ENCODE measurements at regions of chr6 and their contacts with region 1.

Region 1: GRCh38 chr6:31739639-31740396 is at the start of gene MSH5:
- DNase-seq: peak; percentile 99
- ATAC-seq: peak; percentile 83
- H3K4me3 Mint-ChIP-seq: peak within 1 kb of the TSS; percentile 92
- H3K27ac Mint-ChIP-seq: peak within 1 kb of the TSS; percentile 96
- H3K4me1 Mint-ChIP-seq: peaks cover 56% of the 10 kb centered on the region
- H3K27me3 Mint-ChIP-seq: no peaks in the 10 kb centered on the region
- total RNA-seq, gene MSH5: 64.8 to 73.6 TPM

Region 2: DNA sequence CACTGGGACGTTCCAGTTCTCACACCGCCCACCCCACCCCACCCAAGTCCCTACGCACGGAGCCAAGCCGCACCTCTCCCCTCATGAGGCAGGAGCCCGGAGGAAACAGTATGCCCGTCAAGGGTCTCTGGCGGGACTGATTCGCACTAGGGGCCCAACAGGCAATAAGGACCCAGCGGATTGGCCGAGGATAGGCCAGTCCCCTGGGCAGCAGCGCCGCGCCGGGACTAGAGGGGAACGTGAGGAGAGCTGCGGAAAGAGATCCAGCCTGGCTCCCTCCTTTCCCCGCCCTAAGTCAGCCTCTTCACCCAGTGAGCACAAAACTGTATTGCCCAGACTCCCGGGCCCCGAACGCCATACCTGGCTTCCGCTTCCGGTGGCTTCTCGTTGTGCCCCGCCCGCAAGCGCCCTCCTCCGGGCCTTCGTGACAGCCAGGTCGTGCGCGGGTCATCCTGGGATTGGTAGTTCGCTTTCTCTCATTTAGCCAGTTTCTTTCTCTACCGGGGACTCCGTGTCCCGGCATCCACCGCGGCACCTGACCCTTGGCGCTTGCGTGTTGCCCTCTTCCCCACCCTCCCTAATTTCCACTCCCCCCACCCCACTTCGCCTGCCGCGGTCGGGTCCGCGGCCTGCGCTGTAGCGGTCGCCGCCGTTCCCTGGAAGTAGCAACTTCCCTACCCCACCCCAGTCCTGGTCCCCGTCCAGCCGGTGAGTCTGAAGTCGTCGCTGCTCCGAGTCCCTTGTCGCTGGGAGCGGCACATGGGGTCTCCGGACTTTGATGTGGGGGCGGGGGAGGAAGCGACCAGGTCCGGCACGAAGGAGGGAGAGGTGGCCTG is 74.1 kb before region 1 on chr6 and contains the start of gene CSNK2B:
- CTCF ChIA-PET with region 1: interaction called, 5 read pairs
- POLR2A ChIA-PET with region 1: interaction called, 42 read pairs
- DNase-seq: peak; percentile 99
- ATAC-seq: peak; percentile 85
- H3K4me3 Mint-ChIP-seq: peak within 1 kb of the TSS; percentile 96
- H3K27ac Mint-ChIP-seq: peak within 1 kb of the TSS; percentile 95
- H3K4me1 Mint-ChIP-seq: peaks cover 73% of the 10 kb centered on the region
- H3K27me3 Mint-ChIP-seq: no peaks in the 10 kb centered on the region
- total RNA-seq, gene CSNK2B: 233 to 250 TPM

Region 3: GRCh38 chr6:31729515-31729978 is 10.3 kb before region 1 on chr6:
- CTCF ChIA-PET with region 1: interaction called, 38 read pairs
- POLR2A ChIA-PET with region 1: interaction called, 83 read pairs
- DNase-seq: peak; percentile 88
- ATAC-seq: peak; percentile 67
- H3K4me3 Mint-ChIP-seq: peak overlapping the region; percentile 95
- H3K27ac Mint-ChIP-seq: peak overlapping the region; percentile 90
- H3K4me1 Mint-ChIP-seq: peaks cover 81% of the 10 kb centered on the region
- H3K27me3 Mint-ChIP-seq: no peaks in the 10 kb centered on the region

Region 4: DNA sequence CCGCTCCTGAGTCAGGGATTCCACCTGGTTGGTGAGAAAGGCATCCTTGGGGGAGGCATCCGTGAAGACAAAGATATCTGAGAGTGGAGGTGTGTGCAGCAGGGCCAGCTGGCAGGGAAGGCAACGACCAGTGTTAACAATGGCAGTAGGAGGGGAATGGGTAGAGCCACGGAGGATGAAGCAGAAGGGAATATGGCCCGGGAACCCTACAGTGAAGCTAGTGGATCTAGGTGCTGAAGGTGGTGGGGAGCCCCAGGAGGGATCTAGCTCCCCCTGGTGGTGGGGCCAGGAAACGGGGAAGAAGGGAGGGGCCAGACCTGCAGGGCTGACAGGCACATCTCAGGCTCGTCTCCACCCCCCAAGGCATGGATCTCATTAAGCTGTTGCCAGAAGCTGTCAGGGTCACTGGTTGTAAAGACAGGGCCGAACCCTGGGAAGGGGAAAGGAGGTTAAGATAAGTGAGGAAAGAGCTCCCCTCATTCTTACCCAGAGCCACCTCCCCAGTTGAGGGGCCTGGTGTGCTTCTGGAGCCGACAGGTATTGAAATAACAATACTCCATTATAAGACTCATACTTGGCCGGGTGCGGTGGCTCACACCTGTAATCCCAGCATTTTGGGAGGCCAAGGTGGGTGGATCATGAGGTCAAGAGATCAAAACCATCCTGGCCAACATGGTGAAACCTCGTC is 30.0 kb after region 1 on chr6:
- CTCF ChIA-PET with region 1: interaction called, 118 read pairs
- POLR2A ChIA-PET with region 1: interaction called, 31 read pairs
- DNase-seq: peak; percentile 88
- ATAC-seq: peak; percentile 88
- H3K4me3 Mint-ChIP-seq: no peak overlapping the region
- H3K27ac Mint-ChIP-seq: peak overlapping the region; percentile 60
- H3K4me1 Mint-ChIP-seq: peaks cover 49% of the 10 kb centered on the region
- H3K27me3 Mint-ChIP-seq: no peaks in the 10 kb centered on the region

Region 5: GRCh38 chr6:31806465-31807272 is 66.9 kb after region 1 on chr6 and contains the start of gene LSM2:
- CTCF ChIA-PET with region 1: interaction called, 10 read pairs
- POLR2A ChIA-PET with region 1: interaction called, 37 read pairs
- DNase-seq: peak; percentile 98
- ATAC-seq: peak; percentile 98
- H3K4me3 Mint-ChIP-seq: peak within 1 kb of the TSS; percentile 97
- H3K27ac Mint-ChIP-seq: peak within 1 kb of the TSS; percentile 91
- H3K4me1 Mint-ChIP-seq: peaks cover 33% of the 10 kb centered on the region
- H3K27me3 Mint-ChIP-seq: no peaks in the 10 kb centered on the region
- total RNA-seq, gene LSM2: 123 to 128 TPM